Activated naive CD4-positive, alpha-beta T cell treated with anti-CD3 and anti-CD28 coated beads for 36 hours (primary cell): ENCODE measurements at regions of chr6 and their contacts with region 1.

Region 1: GRCh38 chr6:83215131-83216047 is 22.2 kb downstream of the RWDD2A start:
- DNase-seq: peak; percentile 80
- H3K4me3 Mint-ChIP-seq: no peak overlapping the region
- H3K27ac Mint-ChIP-seq: no peak overlapping the region
- H3K4me1 Mint-ChIP-seq: no peaks in the 10 kb centered on the region
- H3K27me3 Mint-ChIP-seq: no peaks in the 10 kb centered on the region

Region 2: DNA sequence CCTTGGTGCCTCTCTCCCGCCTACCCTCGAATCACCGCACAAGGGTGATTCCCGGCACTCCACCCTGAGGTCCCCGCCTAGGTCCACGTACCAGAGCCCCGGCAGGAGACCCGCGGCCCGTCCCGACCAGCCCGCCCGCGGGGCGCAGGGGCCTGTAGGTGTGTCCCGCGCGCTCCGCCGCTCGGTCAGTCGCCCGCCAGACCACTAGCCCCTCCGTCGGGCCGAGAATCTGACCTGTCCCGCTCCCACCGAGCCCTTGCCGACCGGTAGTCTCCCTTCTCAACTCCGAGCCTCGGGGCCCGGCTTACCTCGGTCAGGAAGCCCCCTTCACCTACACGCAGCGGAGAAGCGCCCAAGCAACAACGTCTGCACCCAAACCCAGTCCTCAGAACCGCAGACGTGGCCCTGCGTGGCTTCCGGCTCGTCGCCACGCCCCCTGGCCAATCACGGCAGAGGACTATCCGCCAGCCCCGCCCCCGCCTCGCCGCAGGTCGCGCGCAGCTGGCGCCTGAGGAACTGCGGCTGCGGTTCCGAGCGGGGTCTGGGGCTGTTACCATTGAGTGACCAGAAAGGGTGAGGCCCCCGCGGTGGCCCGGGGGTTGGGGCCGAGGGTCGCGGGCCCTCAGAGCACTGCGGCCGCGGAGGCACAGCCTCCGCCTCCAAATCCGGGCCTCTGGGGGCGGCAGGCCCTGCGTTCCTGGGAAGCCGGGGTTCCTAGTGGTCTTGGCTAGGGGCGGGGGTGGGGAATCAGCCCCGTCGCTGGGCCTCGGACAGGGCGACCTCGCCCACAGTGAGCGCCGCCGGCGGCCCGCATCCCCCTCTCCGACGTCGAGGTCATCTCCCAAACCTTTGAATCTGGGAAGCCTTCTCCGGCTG is 22.3 kb before region 1 on chr6 and contains the starts of genes PGM3 and RWDD2A:
- CTCF ChIA-PET with region 1: interaction called, 6 read pairs
- intact Hi-C with region 1: loop called (anchors 1 kb)
- DNase-seq: peak; percentile 91
- H3K4me3 Mint-ChIP-seq: peak within 1 kb of the TSS; percentile 96
- H3K27ac Mint-ChIP-seq: peak within 1 kb of the TSS; percentile 89
- H3K4me1 Mint-ChIP-seq: peaks cover 38% of the 10 kb centered on the region
- H3K27me3 Mint-ChIP-seq: peaks cover 2% of the 10 kb centered on the region
- total RNA-seq, gene PGM3: 17.0 to 19.8 TPM
- total RNA-seq, gene RWDD2A: 1.4 TPM

Region 3: DNA sequence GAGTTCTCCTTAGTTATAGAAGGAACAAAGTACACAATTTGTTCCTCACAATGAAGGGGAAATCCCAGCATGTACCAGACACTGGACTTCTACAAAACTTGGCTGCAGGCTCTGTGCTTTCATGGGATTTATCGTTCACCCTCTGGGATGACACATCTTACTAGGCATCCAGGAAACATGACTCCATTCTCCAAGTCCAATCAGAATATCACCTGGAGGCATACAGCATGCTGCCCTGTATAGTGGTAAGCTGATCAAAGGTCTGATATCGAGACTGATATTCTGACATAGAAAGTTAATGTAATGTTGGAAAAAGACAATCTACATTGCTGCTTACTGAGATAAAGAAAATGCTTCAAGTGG is 15.5 kb before region 1 on chr6:
- CTCF ChIA-PET with region 1: interaction called, 10 read pairs
- intact Hi-C with region 1: no loop called
- DNase-seq: no peak
- H3K4me3 Mint-ChIP-seq: no peak overlapping the region
- H3K27ac Mint-ChIP-seq: no peak overlapping the region
- H3K4me1 Mint-ChIP-seq: peaks cover 6% of the 10 kb centered on the region
- H3K27me3 Mint-ChIP-seq: no peaks in the 10 kb centered on the region

Region 4: DNA sequence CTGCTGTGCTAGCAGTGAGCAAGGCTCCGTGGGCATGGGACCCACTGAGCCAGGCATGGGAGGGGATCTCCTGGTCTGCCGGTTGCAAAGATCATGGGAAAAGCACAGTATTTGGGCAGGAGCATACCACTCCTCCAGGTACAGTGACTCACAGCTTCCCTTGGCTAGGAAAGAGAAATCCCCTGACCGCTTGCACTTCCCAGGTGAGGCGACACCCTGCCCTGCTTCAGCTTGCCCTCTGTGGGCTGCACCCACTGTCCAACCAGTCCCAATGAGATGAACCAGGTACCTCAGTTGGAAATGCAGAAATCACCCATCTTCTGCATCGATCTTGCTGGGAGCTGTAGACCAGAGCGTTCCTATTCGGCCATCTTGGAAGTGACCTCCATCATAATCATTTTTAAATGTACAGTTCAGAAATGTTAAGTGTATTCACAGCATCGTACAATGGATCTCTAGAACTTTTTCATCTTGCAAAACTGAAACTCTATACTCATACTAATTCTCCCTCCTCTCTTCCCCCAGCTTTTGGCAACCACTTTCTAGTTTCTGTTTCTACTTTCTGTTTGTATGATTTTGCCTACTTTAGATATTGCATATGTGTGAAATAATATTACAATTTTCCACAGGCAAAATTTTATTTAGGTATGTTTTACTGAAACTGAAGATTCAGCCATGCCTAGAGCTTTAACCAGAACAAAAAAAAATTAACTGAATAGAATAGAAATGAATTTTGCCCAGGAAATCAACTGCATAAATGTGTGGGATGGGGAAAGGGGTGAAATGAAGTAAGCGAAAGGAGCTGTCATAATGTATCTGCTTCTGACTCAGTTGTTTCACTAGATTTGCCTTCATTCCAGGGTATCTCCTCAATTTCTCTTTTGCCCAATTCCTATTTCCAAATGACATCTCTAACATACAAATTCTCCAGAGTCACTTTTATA is 77.8 kb after region 1 on chr6:
- CTCF ChIA-PET with region 1: no interaction called
- intact Hi-C with region 1: no loop called
- DNase-seq: no peak
- H3K4me3 Mint-ChIP-seq: no peak overlapping the region
- H3K27ac Mint-ChIP-seq: no peak overlapping the region
- H3K4me1 Mint-ChIP-seq: peaks cover 9% of the 10 kb centered on the region
- H3K27me3 Mint-ChIP-seq: peaks cover 42% of the 10 kb centered on the region

Region 5: GRCh38 chr6:83514866-83515466 is 299.6 kb after region 1 on chr6:
- CTCF ChIA-PET with region 1: interaction called, 130 read pairs
- intact Hi-C with region 1: no loop called
- DNase-seq: peak; percentile 45
- H3K4me3 Mint-ChIP-seq: no peak overlapping the region
- H3K27ac Mint-ChIP-seq: no peak overlapping the region
- H3K4me1 Mint-ChIP-seq: peaks cover 7% of the 10 kb centered on the region
- H3K27me3 Mint-ChIP-seq: peaks cover 39% of the 10 kb centered on the region